ENCODE measurements at regions of chr13 and their contacts with region 1.

Region 1: GRCh38 chr13:24220086-24220703 is 59.7 kb downstream of the SPATA13 start:
- DNase-seq: peak; percentile 60
- CTCF ChIP-seq: peak; percentile 82

Region 2: DNA sequence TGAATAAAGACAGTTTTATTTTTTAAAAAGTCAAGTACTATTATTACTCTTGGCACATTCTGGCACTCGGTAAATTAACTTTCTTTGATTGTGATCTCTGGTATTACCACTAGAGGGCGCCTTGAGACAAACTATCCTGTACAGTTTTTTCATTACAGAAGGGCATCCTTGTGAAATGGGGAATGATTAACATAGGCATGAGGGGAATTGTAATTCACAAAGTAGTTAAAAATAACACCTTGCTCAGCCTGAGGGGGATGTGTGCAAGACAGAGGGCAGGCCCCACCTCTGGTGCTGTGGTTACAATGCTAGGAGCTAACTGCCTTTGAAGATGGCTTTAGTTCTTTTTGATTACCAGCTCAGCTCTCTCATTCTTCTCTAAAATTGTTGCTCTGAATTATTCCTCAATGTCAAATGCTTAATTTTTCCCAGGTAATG is 298.7 kb before region 1 on chr13:
- CTCF ChIA-PET with region 1: interaction called, 14 read pairs
- POLR2A ChIA-PET with region 1: no interaction called
- DNase-seq: no peak
- CTCF ChIP-seq: peak; percentile 52

Region 3: DNA sequence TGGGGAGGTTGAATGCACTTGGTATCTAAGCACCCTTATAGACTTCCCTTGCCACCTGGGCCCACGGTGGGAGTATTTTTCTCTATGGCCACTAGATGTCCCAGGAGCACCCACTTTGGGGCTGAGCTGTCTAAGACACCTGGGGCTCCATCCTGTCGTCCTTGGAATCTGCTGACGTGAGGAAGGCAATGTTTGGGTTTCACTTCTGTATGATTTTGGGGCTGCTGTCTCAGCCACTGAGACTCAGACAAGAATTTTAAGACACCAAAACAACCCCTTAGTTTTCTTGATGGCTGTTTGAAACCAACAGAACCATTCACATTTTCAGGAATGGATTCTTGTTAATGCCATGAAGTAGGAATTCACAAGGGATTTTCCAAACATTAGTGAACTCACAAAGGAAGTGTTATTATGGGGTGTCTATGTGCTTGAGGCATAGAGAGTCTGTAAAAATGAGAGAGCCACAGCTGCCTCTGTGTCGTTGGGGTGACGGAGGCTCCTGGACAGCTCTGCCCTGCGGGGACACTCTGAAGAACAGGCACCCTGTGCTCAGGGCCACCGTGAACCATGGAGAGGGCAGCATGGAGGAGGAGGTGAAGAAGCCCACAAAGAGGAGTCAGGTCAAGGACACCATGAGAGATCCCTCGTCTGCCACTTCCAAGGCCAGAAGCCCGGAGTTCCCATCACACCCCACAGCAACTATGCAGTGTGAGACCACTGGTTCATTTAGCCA is 166.5 kb before region 1 on chr13:
- CTCF ChIA-PET with region 1: interaction called, 53 read pairs
- POLR2A ChIA-PET with region 1: no interaction called
- DNase-seq: peak; percentile 78
- CTCF ChIP-seq: peak; percentile 74

Region 4: DNA sequence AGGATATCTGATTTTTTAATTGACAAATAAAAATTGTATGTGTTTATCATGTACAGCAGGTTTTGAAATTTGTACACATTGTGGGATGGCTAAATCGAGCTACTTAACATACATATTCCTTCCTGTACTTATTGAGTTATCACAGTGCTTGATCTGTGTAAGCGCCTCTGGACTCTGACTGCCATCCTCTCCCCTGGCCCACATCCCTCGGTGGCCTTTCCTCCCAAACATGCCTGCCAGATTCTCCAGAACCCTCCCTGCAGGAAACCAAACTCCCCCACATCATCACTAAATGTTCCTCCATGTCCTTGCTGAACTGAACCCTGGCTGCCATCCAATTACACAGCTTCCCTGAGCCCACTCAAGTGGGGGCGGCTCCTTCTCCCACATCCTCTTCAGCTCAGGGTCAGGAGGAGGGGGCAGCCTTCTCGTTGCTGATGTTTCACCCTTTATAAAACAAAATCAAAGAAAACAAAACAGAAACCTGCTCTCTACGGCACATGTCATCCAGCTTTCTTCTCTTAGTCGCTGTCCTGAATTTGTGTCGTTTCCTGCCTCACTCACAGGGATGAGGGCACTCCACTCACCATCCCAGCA is 156.8 kb before region 1 on chr13:
- CTCF ChIA-PET with region 1: interaction called, 16 read pairs
- POLR2A ChIA-PET with region 1: no interaction called
- DNase-seq: no peak
- CTCF ChIP-seq: no peak